ENCODE measurements at regions of chr19 and their contacts with region 1.

Region 1: GRCh38 chr19:2016041-2016807 is 710 bp upstream of the BTBD2 start:
- DNase-seq: peak; percentile 67
- ATAC-seq: peak; percentile 72
- H3K4me3 ChIP-seq: peak overlapping the region in 3 of 5 experiments; percentile 28 to 44 (median 39)
- H3K4me3 Mint-ChIP-seq: peak overlapping the region; percentile 47
- H3K27ac ChIP-seq: peak overlapping the region in 1 of 2 donors; percentile 7
- H3K27ac Mint-ChIP-seq: peak overlapping the region; percentile 41
- H3K4me1 ChIP-seq: peaks cover 15 to 24% of the 10 kb centered on the region in 2 donors
- H3K4me1 Mint-ChIP-seq: peaks cover 25% of the 10 kb centered on the region
- H3K27me3 ChIP-seq: no peaks in the 10 kb centered on the region
- H3K27me3 Mint-ChIP-seq: no peaks in the 10 kb centered on the region
- CTCF ChIP-seq: no peak

Region 2: GRCh38 chr19:1875646-1876495 is 140.4 kb before region 1 on chr19:
- CTCF ChIA-PET with region 1: no interaction called
- POLR2A ChIA-PET with region 1: no interaction called
- intact Hi-C with region 1: loop called (anchors 10 kb)
- DNase-seq: peak; percentile 93
- ATAC-seq: peak; percentile 94
- H3K4me3 ChIP-seq: peak overlapping the region; percentile 81 to 97 (median 92)
- H3K4me3 Mint-ChIP-seq: peak overlapping the region; percentile 99
- H3K27ac ChIP-seq: peak overlapping the region; percentile 66 to 96
- H3K27ac Mint-ChIP-seq: peak overlapping the region; percentile 94
- H3K4me1 ChIP-seq: peaks cover 20 to 36% of the 10 kb centered on the region in 2 donors
- H3K4me1 Mint-ChIP-seq: peaks cover 28% of the 10 kb centered on the region
- H3K27me3 ChIP-seq: no peaks in the 10 kb centered on the region
- H3K27me3 Mint-ChIP-seq: no peaks in the 10 kb centered on the region
- CTCF ChIP-seq: no peak

Region 3: DNA sequence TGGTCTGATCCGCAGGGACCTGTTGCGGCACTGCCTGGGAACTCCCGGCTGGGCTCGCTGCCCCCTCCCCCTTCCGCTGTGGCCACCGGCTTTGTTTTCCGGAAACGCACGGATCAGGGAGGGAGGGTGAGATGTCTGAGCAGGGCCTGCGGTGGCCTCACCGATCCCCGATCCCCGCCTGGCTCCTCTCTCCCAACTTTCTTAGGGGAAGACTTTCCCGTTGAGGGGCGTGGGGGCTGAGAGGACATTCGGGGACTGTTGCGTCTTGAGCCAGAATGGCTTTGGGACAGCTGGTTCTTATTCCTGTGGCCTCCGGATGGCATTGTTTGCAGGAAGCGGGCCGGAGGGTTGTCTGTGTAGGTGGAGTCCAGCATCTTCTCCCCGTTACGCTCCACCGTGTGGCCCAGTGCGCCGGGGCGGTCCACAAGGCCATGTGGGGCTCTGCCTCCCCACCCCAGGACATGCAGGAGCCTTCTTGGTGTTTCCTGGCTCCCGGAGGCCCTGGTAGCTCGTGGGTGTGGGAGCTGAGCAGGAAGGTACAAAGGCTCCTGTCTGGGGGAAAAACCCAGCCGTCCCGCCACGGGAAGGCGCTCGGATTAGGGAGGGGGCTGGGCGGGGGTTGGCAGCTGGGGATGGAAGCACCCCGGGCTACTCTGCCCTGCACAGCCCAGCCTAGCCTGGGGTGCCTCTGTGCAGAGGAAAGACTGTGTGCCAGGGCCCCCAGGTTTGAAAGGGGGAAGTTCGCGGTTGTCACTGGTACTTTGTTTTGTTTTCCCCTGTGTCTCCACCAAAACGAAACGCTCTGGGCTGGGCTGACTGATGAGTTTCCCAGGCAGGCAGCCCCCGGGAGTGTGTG is 73.9 kb before region 1 on chr19:
- CTCF ChIA-PET with region 1: no interaction called
- POLR2A ChIA-PET with region 1: interaction called, 10 read pairs
- intact Hi-C with region 1: no loop called
- DNase-seq: peak; percentile 87
- ATAC-seq: peak; percentile 53
- H3K4me3 ChIP-seq: peak overlapping the region; percentile 71 to 94 (median 83)
- H3K4me3 Mint-ChIP-seq: peak overlapping the region; percentile 98
- H3K27ac ChIP-seq: peak overlapping the region; percentile 90 to 99
- H3K27ac Mint-ChIP-seq: peak overlapping the region; percentile 98
- H3K4me1 ChIP-seq: peaks cover 31 to 47% of the 10 kb centered on the region in 2 donors
- H3K4me1 Mint-ChIP-seq: peaks cover 39% of the 10 kb centered on the region
- H3K27me3 ChIP-seq: no peaks in the 10 kb centered on the region
- H3K27me3 Mint-ChIP-seq: no peaks in the 10 kb centered on the region
- CTCF ChIP-seq: no peak

Region 4: DNA sequence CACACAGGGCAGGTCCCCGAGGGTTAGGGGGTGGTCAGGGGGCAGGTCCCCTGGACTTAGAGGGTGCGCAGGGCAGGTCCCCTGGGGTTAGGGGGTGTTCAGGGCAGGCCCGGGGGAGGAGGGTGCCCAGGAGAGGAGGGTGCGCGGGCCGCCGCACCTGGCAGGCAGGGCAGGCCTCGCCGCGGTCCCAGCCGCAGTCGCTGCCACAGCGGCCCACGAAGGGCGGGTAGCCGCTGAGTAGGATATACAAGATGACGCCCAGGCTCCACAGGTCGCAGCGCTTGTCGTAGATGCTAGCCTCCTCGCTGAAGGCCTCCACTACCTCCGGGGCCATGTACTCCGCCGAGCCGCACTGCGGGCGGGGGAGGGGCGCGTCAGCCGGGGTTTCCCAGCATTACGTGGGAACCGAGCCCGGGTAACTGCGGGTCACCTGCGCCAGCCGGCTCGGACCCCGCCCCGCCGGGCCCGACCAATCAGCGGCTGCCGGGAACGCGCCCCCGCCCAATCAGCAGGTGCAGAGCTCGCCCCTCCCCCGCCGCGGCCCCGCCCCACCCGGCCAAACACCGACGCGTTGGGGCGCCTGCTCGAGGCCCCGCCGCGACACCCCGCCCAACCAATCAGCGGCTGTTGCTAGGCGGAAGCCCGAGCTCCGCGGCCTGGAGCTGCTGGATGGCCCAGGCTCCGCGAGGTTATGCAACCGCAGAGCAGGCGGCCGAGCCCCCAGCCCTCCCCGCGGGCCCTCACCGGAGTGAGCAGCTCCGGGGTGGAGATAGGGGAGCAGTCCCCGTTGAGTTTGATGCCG is 25.7 kb after region 1 on chr19:
- CTCF ChIA-PET with region 1: interaction called, 10 read pairs
- POLR2A ChIA-PET with region 1: interaction called, 6 read pairs
- intact Hi-C with region 1: loop called (anchors 2 kb)
- DNase-seq: peak; percentile 98
- ATAC-seq: peak; percentile 73
- H3K4me3 ChIP-seq: peak overlapping the region in 4 of 5 experiments; percentile 32 to 55 (median 42)
- H3K4me3 Mint-ChIP-seq: peak overlapping the region; percentile 74
- H3K27ac ChIP-seq: peak overlapping the region; percentile 98 to 99
- H3K27ac Mint-ChIP-seq: peak overlapping the region; percentile 87
- H3K4me1 ChIP-seq: peaks cover 54 to 67% of the 10 kb centered on the region in 2 donors
- H3K4me1 Mint-ChIP-seq: peaks cover 63% of the 10 kb centered on the region
- H3K27me3 ChIP-seq: no peaks in the 10 kb centered on the region
- H3K27me3 Mint-ChIP-seq: no peaks in the 10 kb centered on the region
- CTCF ChIP-seq: no peak

Region 5: DNA sequence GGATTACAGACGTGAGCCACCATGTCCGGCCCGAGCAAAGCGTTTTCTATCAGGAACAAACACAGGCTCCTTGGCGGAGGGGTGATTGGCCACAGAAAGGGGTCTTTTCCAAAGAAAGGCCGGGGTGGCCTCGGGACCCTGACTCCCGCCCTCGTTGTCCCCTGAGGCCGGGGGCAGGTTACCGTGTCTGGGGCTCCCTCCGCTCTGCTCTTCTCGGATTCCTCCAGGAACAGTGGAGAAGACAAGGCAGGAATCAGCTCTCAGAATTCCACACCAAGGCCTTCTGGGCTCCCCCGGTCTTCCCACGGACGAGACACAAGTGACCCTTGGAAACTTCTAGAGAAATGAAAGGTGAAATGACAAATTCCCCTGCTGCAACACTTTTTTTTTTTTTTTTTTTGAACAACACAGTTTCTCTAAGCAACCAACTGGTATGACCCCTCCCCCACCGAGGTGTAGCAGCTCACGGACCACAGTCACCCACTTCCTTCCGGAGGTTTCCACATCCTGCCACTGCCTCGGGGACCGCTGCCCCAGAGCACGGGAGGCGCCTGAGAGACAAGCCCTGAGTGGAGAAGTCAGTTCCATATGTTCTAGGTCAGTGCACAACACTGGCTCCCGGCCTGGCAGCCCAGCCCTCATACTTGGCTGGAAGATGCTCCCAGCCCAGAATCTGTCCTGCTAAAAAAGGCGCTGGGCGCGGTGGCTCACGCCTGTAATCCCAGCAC is 68.9 kb after region 1 on chr19:
- CTCF ChIA-PET with region 1: interaction called, 5 read pairs
- POLR2A ChIA-PET with region 1: interaction called, 13 read pairs
- intact Hi-C with region 1: no loop called
- DNase-seq: peak; percentile 97
- ATAC-seq: peak; percentile 29
- H3K4me3 ChIP-seq: peak overlapping the region; percentile 87 to 100 (median 98)
- H3K4me3 Mint-ChIP-seq: peak overlapping the region; percentile 92
- H3K27ac ChIP-seq: peak overlapping the region; percentile 96 to 99
- H3K27ac Mint-ChIP-seq: peak overlapping the region; percentile 99
- H3K4me1 ChIP-seq: peaks cover 74 to 81% of the 10 kb centered on the region in 2 donors
- H3K4me1 Mint-ChIP-seq: peaks cover 79% of the 10 kb centered on the region
- H3K27me3 ChIP-seq: no peaks in the 10 kb centered on the region
- H3K27me3 Mint-ChIP-seq: no peaks in the 10 kb centered on the region
- CTCF ChIP-seq: no peak